Ascending aorta (tissue), 2 donors: ENCODE measurements at regions of chr21 and their contacts with region 1.

Region 1: DNA sequence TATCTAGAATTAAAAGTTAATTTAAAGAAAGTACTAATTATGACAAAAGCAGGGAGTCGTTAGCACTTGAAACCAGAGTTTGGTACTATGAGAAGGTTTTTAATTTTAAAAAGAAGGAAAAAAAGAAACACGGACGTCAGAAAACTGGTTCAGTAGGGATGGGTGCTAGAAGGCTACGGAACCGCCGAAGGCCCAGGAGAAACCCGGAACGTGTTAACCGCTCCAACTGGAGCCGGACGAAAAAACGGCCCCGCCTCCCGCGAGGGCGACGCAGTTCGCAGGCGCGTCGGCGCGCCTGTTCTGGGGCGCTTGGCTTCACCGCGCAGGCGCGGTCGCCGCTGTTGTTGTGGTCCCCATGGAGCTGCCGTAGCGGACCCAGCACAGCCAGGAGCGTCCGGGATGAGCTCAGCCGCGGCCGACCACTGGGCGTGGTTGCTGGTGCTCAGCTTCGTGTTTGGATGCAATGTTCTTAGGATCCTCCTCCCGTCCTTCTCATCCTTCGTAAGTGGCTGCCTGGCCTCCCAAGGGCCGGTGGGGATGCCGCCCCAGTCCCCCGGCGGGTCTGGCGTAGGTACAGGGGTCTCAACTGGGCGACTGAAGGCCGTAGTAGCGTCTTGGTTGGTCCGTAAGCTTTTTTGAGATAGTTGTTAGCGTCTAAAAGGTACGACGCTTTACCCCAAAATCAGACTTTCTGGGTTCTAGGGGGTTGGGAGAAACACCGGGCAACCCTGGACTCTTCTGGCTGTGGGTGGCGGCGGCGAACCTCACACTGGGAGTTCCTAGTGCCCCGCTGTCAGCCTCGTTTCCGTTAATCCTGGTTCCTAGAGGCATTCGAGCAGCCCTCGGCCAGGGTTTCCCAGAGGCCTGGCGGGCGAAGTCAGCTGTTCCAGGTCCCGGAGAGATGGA is 31.4 kb upstream of the HMGN1 start:
- DNase-seq: peak; percentile 87 to 98
- H3K4me3 ChIP-seq: peak overlapping the region; percentile 79 to 85
- H3K27ac ChIP-seq: peak overlapping the region; percentile 95 to 96
- H3K4me1 ChIP-seq: peaks cover 0 to 8% of the 10 kb centered on the region in 2 donors
- H3K27me3 ChIP-seq: no peaks in the 10 kb centered on the region
- CTCF ChIP-seq: no peak

Region 2: DNA sequence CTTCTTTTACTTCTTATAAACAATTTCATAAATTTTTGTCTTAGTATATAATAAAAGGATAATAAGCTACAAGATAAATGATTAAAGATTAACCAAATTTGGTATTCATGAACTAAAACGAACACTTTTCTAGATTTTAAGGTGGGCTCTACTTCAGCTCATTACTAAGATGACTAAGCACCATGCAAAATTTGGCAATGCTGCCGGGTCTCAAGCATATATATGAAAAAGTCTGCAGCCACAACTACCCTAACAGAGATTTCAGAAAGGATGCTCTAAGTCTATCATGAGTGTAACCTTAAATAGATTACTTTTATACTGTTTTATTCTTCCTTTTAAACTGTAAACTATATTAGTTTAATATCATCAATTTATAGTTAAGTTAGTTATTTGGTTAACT is 114.6 kb before region 1 on chr21:
- intact Hi-C with region 1: no loop called
- DNase-seq: no peak
- H3K4me3 ChIP-seq: no peak overlapping the region
- H3K27ac ChIP-seq: no peak overlapping the region
- H3K4me1 ChIP-seq: no peaks in the 10 kb centered on the region
- H3K27me3 ChIP-seq: no peaks in the 10 kb centered on the region
- CTCF ChIP-seq: no peak

Region 3: DNA sequence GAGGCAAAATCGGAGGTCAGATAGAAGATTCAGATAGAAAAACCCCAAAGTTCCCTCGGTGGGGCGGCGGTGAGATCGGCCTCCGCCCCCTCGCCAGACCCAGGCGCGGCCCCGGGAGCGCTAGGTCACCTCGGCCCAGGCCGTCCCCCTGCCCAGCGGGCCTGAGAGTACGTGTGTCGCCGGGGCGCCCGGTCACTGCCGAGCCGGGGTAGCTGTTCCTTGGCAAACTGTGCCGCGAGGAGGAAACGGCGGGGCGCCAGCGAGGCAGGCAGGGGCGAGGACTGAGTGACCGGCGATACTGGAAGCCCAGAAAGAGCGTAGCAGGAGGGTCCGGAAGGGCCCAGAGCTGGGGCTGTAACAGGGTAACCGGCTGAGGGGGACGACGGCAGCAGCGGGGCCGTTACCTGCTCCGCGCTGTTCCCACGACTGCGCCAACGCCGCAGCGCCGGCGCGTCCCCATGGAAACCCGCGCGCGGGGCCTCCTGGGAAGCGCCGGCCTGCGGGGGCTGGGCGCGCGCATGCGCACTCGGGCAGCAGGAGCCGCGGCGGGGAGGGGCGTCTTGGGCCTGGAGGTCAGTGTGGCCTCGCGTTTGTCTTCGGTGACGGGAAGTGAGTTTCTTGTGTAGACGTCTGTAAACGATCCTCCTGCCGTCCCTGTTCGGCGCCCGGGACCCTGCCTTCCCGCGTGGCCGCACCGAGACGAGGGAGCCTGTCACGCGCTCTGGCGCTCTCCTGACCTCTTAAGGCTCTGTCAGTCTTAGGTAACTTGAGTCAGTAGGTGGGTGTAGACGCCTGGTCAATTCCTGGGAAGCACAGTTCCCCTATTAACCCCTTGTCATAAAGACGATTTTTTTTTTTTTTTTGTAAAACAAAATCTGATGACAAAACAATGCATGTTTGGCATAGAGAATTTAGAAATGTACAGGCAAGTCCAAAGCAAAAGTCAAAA is 65.4 kb after region 1 on chr21 and contains the start of gene LCA5L:
- intact Hi-C with region 1: loop called (anchors 2 kb)
- DNase-seq: peak; percentile 51 to 95
- H3K4me3 ChIP-seq: peak within 1 kb of the TSS; percentile 76 to 82
- H3K27ac ChIP-seq: peak within 1 kb of the TSS; percentile 85 to 92
- H3K4me1 ChIP-seq: peaks cover 0 to 3% of the 10 kb centered on the region in 2 donors
- H3K27me3 ChIP-seq: no peaks in the 10 kb centered on the region
- CTCF ChIP-seq: peak in 1 of 3 experiments; percentile 15
- total RNA-seq, gene LCA5L: not detected